Naive thymus-derived CD4-positive, alpha-beta T cell (primary cell): ENCODE measurements at regions of chr11 and their contacts with region 1.

Region 1: GRCh38 chr11:72722050-72722748 is 30.0 kb downstream of the ARAP1 start:
- DNase-seq: peak; percentile 71 to 92 (median 91)
- ATAC-seq: peak; percentile 86
- H3K4me3 ChIP-seq: peak overlapping the region; percentile 98
- H3K4me3 Mint-ChIP-seq: peak overlapping the region; percentile 88 to 99 (median 94)
- H3K27ac ChIP-seq: peak overlapping the region; percentile 78
- H3K27ac Mint-ChIP-seq: peak overlapping the region; percentile 87 to 99 (median 96)
- H3K4me1 ChIP-seq: peaks cover 46 to 49% of the 10 kb centered on the region in 2 donors
- H3K4me1 Mint-ChIP-seq: peaks cover 50 to 80% (median 62%) of the 10 kb centered on the region in 7 donors
- H3K27me3 ChIP-seq: no peaks in the 10 kb centered on the region
- H3K27me3 Mint-ChIP-seq: no peaks in the 10 kb centered on the region

Region 2: GRCh38 chr11:72683782-72684200 is 38.4 kb before region 1 on chr11:
- CTCF ChIA-PET with region 1: interaction called, 4 read pairs
- POLR2A ChIA-PET with region 1: interaction called, 3 read pairs
- intact Hi-C with region 1: loop called in 1 of 2 experiments (anchors 2 kb)
- DNase-seq: peak; percentile 36 to 75 (median 56)
- ATAC-seq: peak; percentile 77
- H3K4me3 ChIP-seq: no peak overlapping the region
- H3K4me3 Mint-ChIP-seq: no peak overlapping the region
- H3K27ac ChIP-seq: no peak overlapping the region
- H3K27ac Mint-ChIP-seq: peak overlapping the region in 3 of 9 donors; percentile 59 to 74 (median 61)
- H3K4me1 ChIP-seq: no peaks in the 10 kb centered on the region
- H3K4me1 Mint-ChIP-seq: peaks cover 7 to 46% (median 16%) of the 10 kb centered on the region in 7 donors
- H3K27me3 ChIP-seq: no peaks in the 10 kb centered on the region
- H3K27me3 Mint-ChIP-seq: peaks cover 0 to 11% (median 0%) of the 10 kb centered on the region in 5 donors

Region 3: GRCh38 chr11:72781313-72782050 is 59.3 kb after region 1 on chr11:
- CTCF ChIA-PET with region 1: interaction called, 10 read pairs
- POLR2A ChIA-PET with region 1: interaction called, 15 read pairs
- intact Hi-C with region 1: no loop called
- DNase-seq: peak; percentile 39 to 68 (median 49)
- ATAC-seq: peak; percentile 92
- H3K4me3 ChIP-seq: peak overlapping the region; percentile 52
- H3K4me3 Mint-ChIP-seq: peak overlapping the region; percentile 73 to 89 (median 84)
- H3K27ac ChIP-seq: peak overlapping the region; percentile 71
- H3K27ac Mint-ChIP-seq: peak overlapping the region in 8 of 9 donors; percentile 11 to 84 (median 68)
- H3K4me1 ChIP-seq: peaks cover 7 to 14% of the 10 kb centered on the region in 2 donors
- H3K4me1 Mint-ChIP-seq: peaks cover 23 to 34% (median 27%) of the 10 kb centered on the region in 7 donors
- H3K27me3 ChIP-seq: no peaks in the 10 kb centered on the region
- H3K27me3 Mint-ChIP-seq: peaks cover 0 to 6% (median 0%) of the 10 kb centered on the region in 5 donors

Region 4: DNA sequence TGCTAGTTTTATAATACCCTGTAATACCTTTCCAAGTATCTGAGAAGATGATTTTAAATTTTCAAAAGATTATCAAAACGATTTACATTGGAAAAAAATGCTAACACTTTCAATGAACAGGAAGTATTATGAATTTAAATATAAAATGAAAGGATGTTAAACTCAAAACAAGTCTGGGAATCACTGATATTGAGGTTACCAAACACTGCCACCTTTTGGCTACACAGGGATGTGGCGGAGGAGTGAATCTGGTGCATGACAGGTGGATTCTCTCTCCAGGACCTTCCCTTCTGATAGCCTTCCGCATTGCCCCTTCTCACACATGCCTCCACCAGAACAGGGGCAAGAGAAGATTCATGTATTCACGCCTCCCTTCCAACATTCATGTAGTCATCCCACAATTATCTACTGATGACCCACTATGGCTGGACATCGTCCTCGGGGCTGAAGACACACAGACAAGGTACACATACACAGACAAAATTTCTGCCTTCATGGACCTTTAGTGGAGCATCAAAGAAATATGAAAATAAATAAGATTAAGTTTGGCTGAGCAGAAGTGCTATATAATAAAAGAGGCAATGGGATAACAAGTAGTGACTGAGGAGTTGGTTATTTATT is 126.8 kb after region 1 on chr11:
- CTCF ChIA-PET with region 1: interaction called, 8 read pairs
- POLR2A ChIA-PET with region 1: interaction called, 3 read pairs
- intact Hi-C with region 1: loop called (anchors 1 kb)
- DNase-seq: peak in 7 of 9 donors; percentile 28 to 61 (median 47)
- ATAC-seq: peak; percentile 81
- H3K4me3 ChIP-seq: no peak overlapping the region
- H3K4me3 Mint-ChIP-seq: no peak overlapping the region
- H3K27ac ChIP-seq: no peak overlapping the region
- H3K27ac Mint-ChIP-seq: peak overlapping the region in 3 of 9 donors; percentile 3 to 81 (median 4)
- H3K4me1 ChIP-seq: no peaks in the 10 kb centered on the region
- H3K4me1 Mint-ChIP-seq: peaks cover 4 to 28% (median 12%) of the 10 kb centered on the region in 7 donors
- H3K27me3 ChIP-seq: no peaks in the 10 kb centered on the region
- H3K27me3 Mint-ChIP-seq: no peaks in the 10 kb centered on the region

Region 5: DNA sequence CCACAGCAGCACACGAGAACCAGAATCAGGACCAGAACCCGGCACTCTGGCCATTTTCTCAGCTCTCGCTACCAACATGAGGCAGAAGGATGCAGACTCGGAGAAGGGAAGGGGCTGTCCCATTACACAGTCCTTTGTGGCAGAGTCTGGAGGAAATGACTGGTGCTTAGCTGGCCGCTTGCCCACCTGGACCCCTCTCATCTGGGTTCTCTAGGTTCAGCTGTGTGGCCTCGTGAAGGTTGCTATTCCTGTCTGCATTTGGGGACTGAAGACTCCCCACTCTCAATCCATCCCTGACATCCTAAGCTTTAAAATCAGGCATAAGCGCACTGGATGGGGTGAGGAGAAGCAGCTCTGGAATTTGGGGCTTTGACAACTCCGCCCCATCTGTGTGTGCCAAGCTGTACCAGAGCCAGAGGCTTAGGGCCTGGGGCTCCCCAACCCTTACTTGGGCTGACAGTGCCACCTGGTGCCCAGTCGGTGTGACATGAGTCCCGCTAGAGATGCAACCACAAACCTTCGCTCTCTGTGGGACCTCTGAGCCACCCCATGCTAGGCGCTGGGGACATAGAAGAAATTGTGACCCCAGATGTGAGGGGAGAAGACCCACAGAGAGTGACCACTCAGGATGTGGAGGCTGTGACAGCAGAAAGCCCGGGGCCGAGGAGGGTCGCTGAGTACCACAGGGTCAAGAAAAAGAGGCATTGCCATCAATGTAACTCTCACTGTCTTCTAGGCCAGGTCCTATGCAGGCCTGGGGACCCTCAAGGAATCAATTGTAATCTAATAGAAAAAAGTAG is 455.8 kb after region 1 on chr11:
- CTCF ChIA-PET with region 1: interaction called, 44 read pairs
- POLR2A ChIA-PET with region 1: interaction called, 3 read pairs
- intact Hi-C with region 1: loop called (anchors 1 kb)
- DNase-seq: peak; percentile 56 to 80 (median 76)
- ATAC-seq: peak; percentile 98
- H3K4me3 ChIP-seq: no peak overlapping the region
- H3K4me3 Mint-ChIP-seq: no peak overlapping the region
- H3K27ac ChIP-seq: no peak overlapping the region
- H3K27ac Mint-ChIP-seq: peak overlapping the region in 2 of 9 donors; percentile 14 to 42
- H3K4me1 ChIP-seq: no peaks in the 10 kb centered on the region
- H3K4me1 Mint-ChIP-seq: peaks cover 4 to 26% (median 9%) of the 10 kb centered on the region in 7 donors
- H3K27me3 ChIP-seq: peaks cover 0 to 2% of the 10 kb centered on the region in 2 donors
- H3K27me3 Mint-ChIP-seq: peaks cover 0 to 27% (median 0%) of the 10 kb centered on the region in 5 donors